Left cardiac atrium (tissue), 4 donors: ENCODE measurements at regions of chr5 and their contacts with region 1.

Region 1: GRCh38 chr5:71782771-71783770 is 64.0 kb downstream of the CARTPT start:
- DNase-seq: peak; percentile 86
- ATAC-seq: peak; percentile 93 to 94

Region 2: GRCh38 chr5:71887680-71888079 is 104.6 kb after region 1 on chr5:
- intact Hi-C with region 1: loop called in 1 of 2 experiments (anchors 10 kb)
- DNase-seq: no peak
- ATAC-seq: peak; percentile 39 to 55

Region 3: DNA sequence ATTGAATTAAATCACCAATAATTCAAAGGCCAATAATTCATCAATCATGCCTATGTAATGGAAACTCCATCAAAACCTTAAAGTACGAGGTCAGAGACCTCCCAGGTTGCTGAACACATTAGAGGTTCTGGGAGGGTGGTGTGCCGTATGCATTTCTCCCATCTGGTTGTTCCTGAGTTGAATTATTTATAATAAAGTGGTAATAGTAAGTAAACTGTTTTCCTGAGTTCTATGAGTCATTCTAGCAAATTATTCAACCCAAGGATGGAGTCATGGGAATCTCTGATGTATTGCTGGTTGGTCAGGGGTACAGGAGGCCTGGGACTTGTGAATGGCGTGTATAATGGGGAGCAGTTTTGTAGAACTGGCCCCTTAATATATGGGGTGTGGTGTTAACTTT is 127.7 kb after region 1 on chr5:
- intact Hi-C with region 1: no loop called
- DNase-seq: no peak
- ATAC-seq: no peak

Region 4: GRCh38 chr5:72018146-72018803 is 235.2 kb after region 1 on chr5:
- intact Hi-C with region 1: loop called in 1 of 2 experiments (anchors 5 kb)
- DNase-seq: peak; percentile 32
- ATAC-seq: peak in 1 of 2 donors; percentile 30

Region 5: DNA sequence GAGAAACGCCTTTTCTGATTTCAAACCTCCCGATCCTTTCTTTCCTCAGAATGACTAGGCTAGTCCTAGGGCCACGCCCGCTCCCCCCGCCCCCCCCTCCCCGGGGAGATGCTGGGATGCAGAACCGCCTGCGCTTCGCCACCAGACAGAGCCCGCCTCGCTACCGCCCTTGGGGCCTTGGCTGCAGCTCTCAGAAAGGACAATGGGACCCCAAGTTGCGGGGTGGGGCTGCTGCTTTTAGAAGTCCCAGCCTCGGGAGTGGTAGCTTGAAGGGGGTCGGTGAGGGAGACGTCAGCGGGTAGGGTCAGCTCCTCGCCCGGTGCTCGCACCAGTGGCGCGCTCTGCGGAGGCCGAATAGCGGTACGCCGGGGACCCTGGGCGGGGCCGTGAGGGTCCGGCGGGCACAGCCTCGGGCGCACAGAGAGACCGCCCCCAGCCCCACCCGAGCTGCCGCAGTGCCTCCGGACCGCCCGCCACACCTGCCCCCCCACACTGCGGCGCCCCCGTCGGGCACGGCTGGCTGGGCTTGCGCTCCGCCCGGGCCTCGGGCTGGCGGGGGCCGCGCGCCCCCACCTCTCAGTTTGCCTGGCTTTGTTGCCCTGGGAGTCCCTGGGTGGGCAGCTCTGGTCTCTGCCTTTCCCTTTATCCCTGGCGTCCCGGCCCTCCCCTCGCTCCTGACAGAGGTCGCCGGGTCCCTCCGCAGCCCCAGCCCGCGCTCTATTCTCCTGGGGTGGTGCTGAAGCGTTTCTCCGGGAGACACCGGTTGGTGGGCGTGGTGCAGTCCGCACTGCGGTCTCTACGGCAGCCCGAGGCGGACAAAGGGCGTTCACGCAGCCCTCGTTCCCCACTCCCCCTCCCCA is 325.4 kb after region 1 on chr5:
- intact Hi-C with region 1: loop called in 1 of 2 experiments (anchors 2 kb)
- DNase-seq: peak; percentile 85
- ATAC-seq: peak; percentile 80 to 84

Region 6: GRCh38 chr5:72307968-72308852 is 525.1 kb after region 1 on chr5:
- intact Hi-C with region 1: loop called in 1 of 2 experiments (anchors 2 kb)
- DNase-seq: peak; percentile 98
- ATAC-seq: peak; percentile 99

Region 7: DNA sequence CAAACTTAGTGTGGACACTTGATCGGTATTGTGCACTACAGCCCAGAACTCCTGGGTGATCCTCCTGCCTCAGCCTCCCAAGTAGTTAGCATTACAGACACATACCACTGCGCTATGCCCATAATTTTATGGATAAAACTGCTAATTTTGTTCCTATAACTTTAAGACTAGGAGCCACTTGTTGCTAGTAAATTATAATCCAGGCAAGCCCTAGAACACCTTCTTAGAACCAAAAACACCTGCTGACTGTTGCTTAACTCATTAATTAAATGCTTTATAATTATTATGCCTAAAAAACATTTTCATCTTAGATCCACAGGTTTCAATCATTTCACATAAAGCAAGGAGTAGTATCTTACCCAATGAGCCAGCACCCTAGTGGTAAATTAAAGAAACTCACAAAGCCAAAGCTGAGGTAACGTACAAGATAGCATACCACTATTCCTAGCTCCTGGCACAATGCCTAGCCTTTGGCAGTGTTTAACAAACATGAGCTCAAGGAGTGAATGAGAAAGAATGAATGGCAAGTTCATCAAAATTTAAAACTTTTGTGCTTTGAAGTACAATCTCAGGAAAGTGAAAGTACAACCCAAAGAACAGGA is 531.6 kb after region 1 on chr5:
- intact Hi-C with region 1: loop called in 1 of 2 experiments (anchors 2 kb)
- DNase-seq: peak; percentile 52
- ATAC-seq: peak; percentile 71 to 75